A549 (cell line): ENCODE measurements at regions of chr17 and their contacts with region 1.

Region 1: DNA sequence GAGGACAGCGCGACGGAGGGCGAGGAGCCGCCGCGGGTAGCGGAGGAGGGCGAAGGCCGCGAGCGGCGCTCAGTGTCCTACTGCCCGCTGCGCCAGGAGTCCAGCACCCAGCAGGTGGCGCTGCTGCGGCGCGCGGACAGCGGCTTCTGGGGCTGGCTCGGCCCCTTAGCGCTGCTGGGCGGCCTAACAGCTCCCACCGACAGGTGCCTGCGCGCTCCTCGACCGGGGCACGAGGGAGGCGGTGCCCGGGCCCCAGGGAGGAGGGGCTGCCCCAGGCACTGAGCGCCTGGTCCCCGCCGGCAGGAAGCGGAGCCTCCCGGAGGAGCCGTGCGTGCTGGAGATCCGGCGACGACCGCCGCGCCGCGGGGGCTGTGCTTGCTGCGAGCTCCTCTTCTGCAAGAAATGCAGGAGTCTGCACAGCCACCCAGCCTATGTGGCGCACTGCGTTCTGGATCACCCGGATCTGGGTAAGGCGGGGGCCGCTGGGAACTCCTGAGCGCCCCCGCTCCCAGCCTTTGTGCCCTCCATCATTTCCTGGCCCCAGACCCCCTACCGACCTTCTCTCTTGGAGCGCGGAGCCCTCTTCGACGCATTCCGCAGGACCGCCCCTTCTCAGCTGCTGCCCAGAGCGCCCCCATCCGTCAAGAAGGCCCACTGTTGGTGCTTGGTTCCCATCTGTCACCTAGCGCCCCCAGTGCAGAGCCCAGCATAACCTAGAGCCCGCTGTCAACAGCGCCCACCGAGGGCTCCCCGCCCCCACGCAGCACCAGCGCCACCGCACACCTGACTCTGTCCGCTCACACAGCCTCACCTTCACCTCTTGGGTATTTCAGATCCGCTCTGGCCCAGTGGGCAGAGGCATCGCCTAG is 3.7 kb downstream of the C17orf50 start:
- DNase-seq: peak; percentile 96 to 98
- ATAC-seq: peak; percentile 94 to 95
- H3K4me3 ChIP-seq: peak overlapping the region; percentile 65
- H3K27ac ChIP-seq: peak overlapping the region; percentile 82 to 87
- H3K4me1 ChIP-seq: no peaks in the 10 kb centered on the region
- CTCF ChIP-seq: peak; percentile 94
- EP300 ChIP-seq: no peak
- POLR2A ChIP-seq: no peak; the same call in none of the 2 replicates
- RAD21 ChIP-seq: peak; percentile 85 to 96

Region 2: DNA sequence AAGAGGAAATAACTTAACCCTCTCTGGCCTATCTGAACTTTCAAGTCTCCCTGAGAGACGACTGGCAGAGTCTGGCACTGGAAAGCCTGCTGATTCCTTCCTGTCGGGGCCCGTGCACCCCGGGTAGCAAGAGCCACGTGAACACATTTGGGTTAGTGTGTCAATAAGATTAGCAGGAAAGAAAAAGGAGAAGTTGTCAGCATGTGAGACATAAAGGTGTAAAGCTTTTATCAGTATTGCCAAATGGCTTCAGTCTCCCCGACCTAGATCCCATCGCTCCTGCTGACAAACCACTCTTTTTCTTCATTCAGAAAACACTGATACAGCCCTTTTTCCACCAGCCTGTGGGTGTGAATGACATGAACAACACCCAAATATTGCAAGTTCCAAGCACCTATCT is 877.5 kb before region 1 on chr17:
- CTCF ChIA-PET with region 1: no interaction called
- POLR2A ChIA-PET with region 1: no interaction called
- DNase-seq: no peak
- ATAC-seq: no peak
- H3K4me3 ChIP-seq: no peak overlapping the region
- H3K27ac ChIP-seq: no peak overlapping the region
- H3K4me1 ChIP-seq: no peaks in the 10 kb centered on the region
- CTCF ChIP-seq: no peak
- EP300 ChIP-seq: no peak
- POLR2A ChIP-seq: no peak
- RAD21 ChIP-seq: no peak

Region 3: DNA sequence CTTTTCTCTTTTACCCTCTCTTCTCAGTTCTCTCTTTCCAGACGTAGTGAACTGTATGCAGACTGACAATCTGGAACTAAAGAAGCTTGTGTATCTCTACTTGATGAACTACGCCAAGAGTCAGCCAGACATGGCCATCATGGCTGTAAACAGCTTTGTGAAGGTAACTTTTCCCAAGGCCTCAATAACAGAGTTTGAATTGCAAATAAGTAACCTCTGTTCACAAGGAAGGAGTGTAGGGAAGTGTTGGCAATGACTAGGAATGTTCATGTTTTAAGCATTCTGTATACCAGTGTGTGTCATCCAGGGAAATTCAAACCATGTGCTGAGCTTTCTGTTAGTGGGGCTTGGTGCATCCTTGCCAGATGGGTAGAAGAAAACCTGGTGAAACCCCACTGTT is 158.7 kb before region 1 on chr17:
- CTCF ChIA-PET with region 1: interaction called, 12 read pairs
- POLR2A ChIA-PET with region 1: no interaction called
- DNase-seq: no peak
- ATAC-seq: peak; percentile 44 to 64; a peak in 5 of 6 replicates
- H3K4me3 ChIP-seq: no peak overlapping the region
- H3K27ac ChIP-seq: no peak overlapping the region
- H3K4me1 ChIP-seq: no peaks in the 10 kb centered on the region
- CTCF ChIP-seq: no peak
- EP300 ChIP-seq: no peak
- POLR2A ChIP-seq: no peak
- RAD21 ChIP-seq: no peak

Region 4: DNA sequence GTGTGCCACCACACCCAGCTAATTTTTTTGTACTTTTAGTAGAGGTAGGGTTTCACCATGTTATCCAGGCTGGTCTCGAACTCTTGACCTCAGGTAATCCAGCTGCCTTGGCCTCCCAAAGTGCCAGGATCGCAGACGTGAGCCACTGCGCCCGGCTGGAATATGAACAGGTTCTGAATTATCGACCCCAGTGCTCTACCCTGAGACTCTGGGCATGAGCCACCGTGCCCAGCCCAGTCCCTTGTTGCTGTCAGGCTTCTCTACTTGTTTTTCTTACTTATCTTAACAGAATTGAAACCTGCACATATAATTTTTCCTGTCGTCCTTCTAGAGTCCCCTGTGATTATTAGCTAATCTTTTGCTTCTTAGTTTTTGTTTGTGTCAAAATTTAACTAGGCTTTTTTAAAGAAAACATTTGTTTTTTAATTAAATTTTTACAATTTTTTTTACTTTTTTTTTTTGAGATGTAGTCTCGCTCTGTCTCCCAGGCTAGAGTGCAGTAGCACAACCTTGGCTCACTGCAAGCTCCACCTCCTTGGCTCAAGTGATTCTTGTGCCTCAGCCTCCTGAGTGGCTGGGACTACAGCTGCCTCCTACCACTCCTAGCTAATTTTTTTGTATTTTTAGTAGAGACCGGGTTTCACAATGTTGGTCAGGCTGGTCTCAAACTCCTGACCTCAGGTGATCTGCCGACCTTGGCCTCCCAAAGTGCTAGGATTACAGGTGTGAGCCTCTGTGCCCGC is 110.6 kb before region 1 on chr17:
- CTCF ChIA-PET with region 1: interaction called, 10 read pairs
- POLR2A ChIA-PET with region 1: no interaction called
- DNase-seq: no peak
- ATAC-seq: no peak
- H3K4me3 ChIP-seq: no peak overlapping the region
- H3K27ac ChIP-seq: no peak overlapping the region
- H3K4me1 ChIP-seq: no peaks in the 10 kb centered on the region
- CTCF ChIP-seq: no peak
- EP300 ChIP-seq: no peak
- POLR2A ChIP-seq: no peak
- RAD21 ChIP-seq: no peak

Region 5: DNA sequence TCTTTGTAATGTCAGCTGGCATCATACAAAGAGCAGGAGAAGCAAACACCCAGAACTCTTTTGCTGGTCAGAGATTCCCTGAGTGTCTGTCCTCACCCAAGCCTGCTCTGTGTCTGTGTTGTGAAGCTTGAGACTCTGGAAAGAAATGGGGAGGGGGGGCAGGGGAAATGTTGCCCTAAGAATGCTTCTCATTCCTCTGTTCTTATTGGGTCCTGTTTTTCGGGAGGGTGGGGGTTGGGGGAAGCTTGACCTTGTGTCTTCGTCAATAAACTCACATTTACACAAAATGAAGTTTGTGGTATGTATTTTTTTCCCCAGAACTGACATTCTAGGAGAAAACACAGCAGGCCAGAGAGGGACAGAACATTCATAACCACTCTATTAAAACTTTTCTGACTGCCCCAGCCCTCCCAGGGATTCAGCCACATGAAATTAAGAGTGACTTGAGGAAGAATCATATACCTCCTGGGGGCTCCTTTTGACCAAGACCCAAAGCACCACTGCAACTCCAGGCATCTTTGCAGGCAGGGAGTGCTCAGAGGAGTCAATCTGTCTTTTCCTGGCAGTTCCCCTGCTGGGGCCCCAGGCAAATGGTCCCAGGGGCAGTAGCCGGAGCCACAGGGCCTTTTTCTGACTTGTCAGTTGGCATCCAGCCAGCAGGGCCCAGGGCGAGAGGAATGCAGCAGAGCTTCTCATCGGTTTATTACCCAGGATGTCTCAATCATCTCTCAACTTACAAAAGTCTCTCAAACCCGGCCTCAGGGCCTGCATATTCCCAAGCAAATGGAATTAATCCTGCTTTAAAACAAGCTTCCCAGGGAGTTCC is 38.0 kb before region 1 on chr17:
- CTCF ChIA-PET with region 1: interaction called, 17 read pairs
- POLR2A ChIA-PET with region 1: no interaction called
- DNase-seq: no peak
- ATAC-seq: no peak
- H3K4me3 ChIP-seq: no peak overlapping the region
- H3K27ac ChIP-seq: peak overlapping the region in 1 of 2 experiments; percentile 2; a peak in 1 of 6 replicates
- H3K4me1 ChIP-seq: 0 out of 3 replicates have a peak, but pooled peaks cover 4% of the 10 kb centered on the region
- CTCF ChIP-seq: no peak
- EP300 ChIP-seq: no peak
- POLR2A ChIP-seq: no peak
- RAD21 ChIP-seq: no peak

Region 6: GRCh38 chr17:35825206-35825605 is 60.8 kb after region 1 on chr17:
- CTCF ChIA-PET with region 1: interaction called, 2,039 read pairs
- POLR2A ChIA-PET with region 1: interaction called, 7 read pairs
- DNase-seq: no peak
- ATAC-seq: no peak
- H3K4me3 ChIP-seq: no peak overlapping the region
- H3K27ac ChIP-seq: no peak overlapping the region
- H3K4me1 ChIP-seq: 0 out of 3 replicates have a peak, but pooled peaks cover 3% of the 10 kb centered on the region
- CTCF ChIP-seq: no peak
- EP300 ChIP-seq: no peak
- POLR2A ChIP-seq: no peak
- RAD21 ChIP-seq: no peak